Activated CD8-positive, alpha-beta T cell treated with anti-CD3 and anti-CD28 coated beads for 36 hours (primary cell): ENCODE measurements at regions of chr3 and their contacts with region 1.

Region 1: GRCh38 chr3:42101048-42101447 is 9.9 kb downstream of the TRAK1 start:
- DNase-seq: no peak
- ATAC-seq: no peak
- H3K4me3 Mint-ChIP-seq: no peak overlapping the region
- H3K27ac Mint-ChIP-seq: no peak overlapping the region
- H3K4me1 Mint-ChIP-seq: peaks cover 32% of the 10 kb centered on the region
- H3K27me3 Mint-ChIP-seq: no peaks in the 10 kb centered on the region
- CTCF ChIP-seq: no peak

Region 2: GRCh38 chr3:41893977-41894376 is 207.1 kb before region 1 on chr3:
- CTCF ChIA-PET with region 1: interaction called, 22 read pairs
- POLR2A ChIA-PET with region 1: interaction called, 3 read pairs
- intact Hi-C with region 1: loop called (anchors 2 kb)
- DNase-seq: peak; percentile 13
- ATAC-seq: no peak
- H3K4me3 Mint-ChIP-seq: no peak overlapping the region
- H3K27ac Mint-ChIP-seq: no peak overlapping the region
- H3K4me1 Mint-ChIP-seq: no peaks in the 10 kb centered on the region
- H3K27me3 Mint-ChIP-seq: no peaks in the 10 kb centered on the region
- CTCF ChIP-seq: peak; percentile 60

Region 3: DNA sequence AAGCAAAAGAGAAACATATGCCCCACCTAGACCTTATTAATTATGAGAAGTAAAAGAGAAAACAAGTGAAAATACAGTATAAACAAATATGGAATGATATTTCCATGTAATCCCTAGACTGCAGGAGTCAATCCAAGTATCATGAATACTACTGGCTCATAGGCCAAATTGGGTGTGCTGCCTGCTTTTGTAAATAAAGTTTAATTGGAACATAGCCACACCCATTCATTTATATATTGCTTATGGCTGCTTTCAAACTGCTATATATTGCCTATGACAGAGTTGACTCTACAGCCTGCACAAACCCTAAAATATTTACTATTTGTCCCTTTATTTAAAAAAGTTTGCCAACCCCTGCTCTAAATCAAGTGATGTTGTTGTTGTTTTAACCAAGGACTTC is 144.5 kb before region 1 on chr3:
- CTCF ChIA-PET with region 1: interaction called, 10 read pairs
- POLR2A ChIA-PET with region 1: no interaction called
- intact Hi-C with region 1: loop called (anchors 5 kb)
- DNase-seq: no peak
- ATAC-seq: no peak
- H3K4me3 Mint-ChIP-seq: no peak overlapping the region
- H3K27ac Mint-ChIP-seq: no peak overlapping the region
- H3K4me1 Mint-ChIP-seq: peaks cover 9% of the 10 kb centered on the region
- H3K27me3 Mint-ChIP-seq: no peaks in the 10 kb centered on the region
- CTCF ChIP-seq: no peak

Region 4: DNA sequence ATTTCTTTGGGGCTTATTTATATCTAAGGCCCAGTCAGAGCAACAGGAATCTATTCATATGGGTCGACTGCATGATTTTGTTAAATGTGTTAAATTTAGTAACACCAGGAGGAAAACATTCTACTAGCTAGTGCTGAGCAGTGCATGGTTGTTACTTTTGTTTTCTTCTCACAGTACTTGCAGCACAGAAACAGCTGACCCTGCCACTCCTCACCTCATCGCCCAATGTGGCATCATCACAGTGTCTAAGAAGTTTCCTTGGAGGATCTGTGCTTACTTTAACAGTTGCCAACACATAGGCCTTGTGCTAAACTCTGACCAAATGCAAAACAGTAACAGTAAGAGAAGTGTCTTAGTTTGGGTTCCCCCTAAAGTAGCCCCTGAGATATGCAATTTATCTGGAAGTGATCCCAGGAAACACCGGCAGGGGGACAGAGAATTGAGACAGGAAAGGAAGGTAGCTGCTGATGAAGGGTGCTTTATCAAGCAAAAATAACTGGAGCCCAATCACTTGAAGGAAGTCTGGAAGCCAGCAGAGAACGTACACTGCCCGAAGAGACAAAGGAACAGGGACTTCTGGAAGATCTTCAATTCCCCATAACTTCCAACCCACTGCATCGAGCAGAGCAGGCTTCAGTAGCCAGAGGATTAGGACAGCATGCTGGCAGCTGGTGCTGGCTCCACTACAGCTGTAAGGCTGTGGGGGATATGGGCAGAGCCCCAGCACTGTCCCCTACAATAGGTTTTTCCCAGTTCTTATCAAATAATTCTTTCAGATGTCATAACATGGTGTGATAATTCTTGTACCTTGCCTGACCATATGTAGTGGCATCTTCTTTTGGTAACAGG is 103.1 kb before region 1 on chr3:
- CTCF ChIA-PET with region 1: interaction called, 29 read pairs
- POLR2A ChIA-PET with region 1: no interaction called
- intact Hi-C with region 1: no loop called
- DNase-seq: peak; percentile 21
- ATAC-seq: no peak
- H3K4me3 Mint-ChIP-seq: no peak overlapping the region
- H3K27ac Mint-ChIP-seq: no peak overlapping the region
- H3K4me1 Mint-ChIP-seq: no peaks in the 10 kb centered on the region
- H3K27me3 Mint-ChIP-seq: peaks cover 4% of the 10 kb centered on the region
- CTCF ChIP-seq: peak; percentile 26

Region 5: DNA sequence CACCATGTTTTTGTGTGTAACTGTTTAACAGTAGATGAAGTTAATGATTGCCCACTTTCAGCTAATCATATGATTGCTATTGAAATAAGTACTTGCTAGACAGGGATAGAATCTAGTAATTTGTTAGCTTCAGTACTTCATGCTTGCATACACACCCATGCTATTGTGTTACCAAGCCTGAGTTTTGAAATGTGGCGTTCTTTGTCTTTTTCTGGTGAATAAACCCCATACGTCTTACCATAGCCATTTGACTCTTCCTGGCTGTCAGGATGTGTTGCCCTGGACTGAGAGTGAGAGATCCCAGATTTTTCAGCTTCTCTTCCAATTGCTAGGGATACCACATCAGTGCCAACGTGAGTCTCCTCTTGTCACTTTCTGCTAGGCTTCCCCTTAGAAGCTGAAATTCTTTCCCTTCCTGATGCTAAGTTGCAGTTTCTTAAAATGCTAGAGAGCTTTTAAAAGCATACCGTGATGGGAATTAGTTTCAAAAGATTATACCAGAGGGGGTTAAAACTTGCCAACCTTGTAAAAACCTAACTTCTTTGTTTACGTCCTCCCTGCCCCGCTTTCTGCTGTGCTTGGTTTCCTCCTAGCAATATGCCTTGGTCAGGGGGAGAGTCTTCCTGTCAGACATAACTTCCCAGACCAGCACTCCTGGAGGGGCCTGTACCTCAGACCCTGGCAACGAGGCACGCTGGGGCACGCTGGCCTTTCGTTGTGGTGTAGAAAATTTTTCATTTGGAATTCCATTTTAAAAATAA is 76.3 kb before region 1 on chr3:
- CTCF ChIA-PET with region 1: interaction called, 13 read pairs
- POLR2A ChIA-PET with region 1: interaction called, 6 read pairs
- intact Hi-C with region 1: no loop called
- DNase-seq: no peak
- ATAC-seq: no peak
- H3K4me3 Mint-ChIP-seq: no peak overlapping the region
- H3K27ac Mint-ChIP-seq: no peak overlapping the region
- H3K4me1 Mint-ChIP-seq: peaks cover 67% of the 10 kb centered on the region
- H3K27me3 Mint-ChIP-seq: no peaks in the 10 kb centered on the region
- CTCF ChIP-seq: no peak

Region 6: GRCh38 chr3:42080452-42080891 is 20.6 kb before region 1 on chr3:
- CTCF ChIA-PET with region 1: interaction called, 20 read pairs
- POLR2A ChIA-PET with region 1: no interaction called
- intact Hi-C with region 1: no loop called
- DNase-seq: peak; percentile 52
- ATAC-seq: peak; percentile 88
- H3K4me3 Mint-ChIP-seq: no peak overlapping the region
- H3K27ac Mint-ChIP-seq: peak overlapping the region; percentile 82
- H3K4me1 Mint-ChIP-seq: peaks cover 53% of the 10 kb centered on the region
- H3K27me3 Mint-ChIP-seq: no peaks in the 10 kb centered on the region
- CTCF ChIP-seq: no peak

Region 7: DNA sequence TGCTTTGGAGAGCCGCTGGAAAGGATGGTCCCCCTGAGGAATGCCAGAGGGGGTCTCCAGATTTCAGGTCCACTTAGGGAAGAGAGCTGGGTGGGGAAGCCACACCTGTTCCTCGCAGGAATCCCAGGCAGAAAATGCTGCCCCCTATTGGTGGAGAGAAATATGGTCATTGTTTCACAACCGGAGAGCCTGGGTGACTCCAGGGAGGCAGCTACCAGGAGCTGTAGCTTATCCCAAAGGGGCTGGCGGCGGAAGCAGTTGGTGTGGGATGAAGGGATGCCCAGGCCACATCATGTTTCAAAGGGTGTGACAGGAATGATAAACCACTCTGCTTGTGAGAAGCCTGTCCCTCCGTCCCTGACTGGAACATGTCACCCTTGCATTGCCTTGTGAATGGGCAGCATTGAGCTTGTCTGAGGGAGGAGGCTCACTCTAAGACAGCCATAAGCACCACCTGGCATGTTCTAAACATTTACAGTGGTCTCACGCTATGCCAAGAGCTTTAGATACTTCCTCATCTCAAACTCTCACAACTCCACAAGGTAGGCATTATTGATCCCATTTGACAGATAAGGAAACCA is 970.4 kb after region 1 on chr3:
- CTCF ChIA-PET with region 1: no interaction called
- POLR2A ChIA-PET with region 1: no interaction called
- intact Hi-C with region 1: no loop called
- DNase-seq: peak; percentile 12
- ATAC-seq: no peak
- H3K4me3 Mint-ChIP-seq: no peak overlapping the region
- H3K27ac Mint-ChIP-seq: no peak overlapping the region
- H3K4me1 Mint-ChIP-seq: peaks cover 3% of the 10 kb centered on the region
- H3K27me3 Mint-ChIP-seq: no peaks in the 10 kb centered on the region
- CTCF ChIP-seq: peak; percentile 95